ENCODE measurements at regions of chr13 and their contacts with region 1.

Region 1: GRCh38 chr13:42354241-42355091 is 82.5 kb downstream of the AKAP11 start:
- DNase-seq: peak; percentile 70
- ATAC-seq: peak; percentile 74
- H3K4me3 Mint-ChIP-seq: peak overlapping the region; percentile 54
- H3K27ac Mint-ChIP-seq: peak overlapping the region; percentile 96
- H3K4me1 Mint-ChIP-seq: peaks cover 45% of the 10 kb centered on the region
- H3K27me3 Mint-ChIP-seq: no peaks in the 10 kb centered on the region

Region 2: DNA sequence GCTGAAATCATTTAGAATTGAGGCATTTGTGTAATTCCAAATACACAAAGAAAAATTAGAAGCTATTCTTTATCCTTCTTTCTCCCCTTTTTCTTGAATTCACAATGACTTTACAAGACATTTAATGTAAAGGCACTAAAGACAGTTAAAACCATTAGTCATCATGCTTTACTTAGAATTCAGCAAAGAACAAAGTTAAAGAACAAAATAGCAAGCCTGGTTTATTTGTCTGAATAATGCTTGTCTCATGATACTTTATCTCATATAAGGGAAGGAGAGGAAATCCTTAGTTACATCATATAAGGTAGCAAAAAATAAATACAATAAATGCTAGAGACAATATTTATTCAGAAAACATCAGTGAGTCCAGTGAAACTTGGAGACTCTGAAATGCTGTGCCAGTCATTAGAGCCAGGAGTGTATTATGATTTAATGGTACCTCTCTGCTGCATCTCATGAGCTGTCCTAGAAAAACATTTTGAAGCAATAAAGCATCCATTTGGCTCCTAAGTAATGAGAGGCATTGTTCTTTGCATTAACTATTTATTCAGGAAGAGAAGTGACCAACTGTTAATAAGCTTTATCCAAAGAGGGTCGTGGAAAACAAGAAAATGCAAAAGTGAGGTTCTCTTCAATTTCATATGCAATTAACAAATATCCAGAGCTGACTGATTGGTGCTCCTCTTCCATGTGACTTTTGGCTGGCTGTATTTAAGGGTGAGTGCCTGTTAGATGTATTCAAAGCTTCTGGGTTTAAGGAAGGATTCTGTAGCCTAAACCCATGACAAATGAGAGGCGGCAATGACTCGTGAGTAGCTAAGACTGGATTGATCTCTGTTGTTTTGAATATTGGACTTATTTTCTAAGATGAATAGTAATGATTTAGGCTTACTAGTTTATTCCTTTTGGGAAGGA is 201.0 kb before region 1 on chr13:
- CTCF ChIA-PET with region 1: no interaction called
- POLR2A ChIA-PET with region 1: no interaction called
- DNase-seq: no peak
- ATAC-seq: no peak
- H3K4me3 Mint-ChIP-seq: no peak overlapping the region
- H3K27ac Mint-ChIP-seq: no peak overlapping the region
- H3K4me1 Mint-ChIP-seq: peaks cover 11% of the 10 kb centered on the region
- H3K27me3 Mint-ChIP-seq: no peaks in the 10 kb centered on the region

Region 3: GRCh38 chr13:42377640-42378382 is 23.3 kb after region 1 on chr13:
- CTCF ChIA-PET with region 1: interaction called, 14 read pairs
- POLR2A ChIA-PET with region 1: interaction called, 7 read pairs
- DNase-seq: peak; percentile 65
- ATAC-seq: peak; percentile 82
- H3K4me3 Mint-ChIP-seq: peak overlapping the region; percentile 30
- H3K27ac Mint-ChIP-seq: peak overlapping the region; percentile 84
- H3K4me1 Mint-ChIP-seq: peaks cover 74% of the 10 kb centered on the region
- H3K27me3 Mint-ChIP-seq: no peaks in the 10 kb centered on the region

Region 4: DNA sequence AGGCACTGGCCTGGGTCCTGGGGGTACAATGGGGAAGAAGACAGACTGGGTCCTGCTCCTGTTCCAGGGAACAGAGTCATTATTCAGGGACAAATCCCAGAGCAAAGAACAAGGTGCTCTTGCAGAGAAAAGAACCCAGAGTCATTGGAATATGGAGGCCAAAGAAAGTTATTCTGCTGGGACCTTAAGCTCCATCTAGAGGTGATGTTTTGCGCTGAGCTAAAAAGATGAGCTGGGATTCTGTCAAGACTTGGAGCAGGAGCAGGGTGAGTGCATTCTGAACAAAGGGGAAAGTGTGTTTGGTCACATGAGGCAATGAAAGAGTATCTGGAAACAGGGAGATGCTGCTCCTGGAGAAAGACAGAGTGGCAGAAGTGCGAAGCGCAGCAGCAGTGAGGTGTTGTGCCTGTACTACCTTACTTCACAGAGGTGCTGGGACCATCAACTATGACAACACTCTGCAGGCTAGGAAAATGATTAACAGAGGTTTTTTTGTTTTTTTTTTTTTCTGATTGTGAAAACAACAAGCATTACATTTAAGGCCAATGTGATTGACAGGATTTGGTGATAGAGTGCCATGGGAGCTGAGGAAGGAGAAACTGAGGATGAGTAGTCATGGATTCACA is 124.2 kb after region 1 on chr13:
- CTCF ChIA-PET with region 1: interaction called, 20 read pairs
- POLR2A ChIA-PET with region 1: no interaction called
- DNase-seq: peak; percentile 27
- ATAC-seq: no peak
- H3K4me3 Mint-ChIP-seq: no peak overlapping the region
- H3K27ac Mint-ChIP-seq: no peak overlapping the region
- H3K4me1 Mint-ChIP-seq: peaks cover 10% of the 10 kb centered on the region
- H3K27me3 Mint-ChIP-seq: no peaks in the 10 kb centered on the region

Region 5: GRCh38 chr13:42633495-42633894 is 279.0 kb after region 1 on chr13:
- CTCF ChIA-PET with region 1: no interaction called
- POLR2A ChIA-PET with region 1: no interaction called
- DNase-seq: no peak
- ATAC-seq: no peak
- H3K4me3 Mint-ChIP-seq: no peak overlapping the region
- H3K27ac Mint-ChIP-seq: no peak overlapping the region
- H3K4me1 Mint-ChIP-seq: no peaks in the 10 kb centered on the region
- H3K27me3 Mint-ChIP-seq: peaks cover 13% of the 10 kb centered on the region